Activated CD4-positive, alpha-beta T cell treated with anti-CD3 and anti-CD28 coated beads for 36 hours (primary cell): ENCODE measurements at regions of chr11 and their contacts with region 1.

Region 1: DNA sequence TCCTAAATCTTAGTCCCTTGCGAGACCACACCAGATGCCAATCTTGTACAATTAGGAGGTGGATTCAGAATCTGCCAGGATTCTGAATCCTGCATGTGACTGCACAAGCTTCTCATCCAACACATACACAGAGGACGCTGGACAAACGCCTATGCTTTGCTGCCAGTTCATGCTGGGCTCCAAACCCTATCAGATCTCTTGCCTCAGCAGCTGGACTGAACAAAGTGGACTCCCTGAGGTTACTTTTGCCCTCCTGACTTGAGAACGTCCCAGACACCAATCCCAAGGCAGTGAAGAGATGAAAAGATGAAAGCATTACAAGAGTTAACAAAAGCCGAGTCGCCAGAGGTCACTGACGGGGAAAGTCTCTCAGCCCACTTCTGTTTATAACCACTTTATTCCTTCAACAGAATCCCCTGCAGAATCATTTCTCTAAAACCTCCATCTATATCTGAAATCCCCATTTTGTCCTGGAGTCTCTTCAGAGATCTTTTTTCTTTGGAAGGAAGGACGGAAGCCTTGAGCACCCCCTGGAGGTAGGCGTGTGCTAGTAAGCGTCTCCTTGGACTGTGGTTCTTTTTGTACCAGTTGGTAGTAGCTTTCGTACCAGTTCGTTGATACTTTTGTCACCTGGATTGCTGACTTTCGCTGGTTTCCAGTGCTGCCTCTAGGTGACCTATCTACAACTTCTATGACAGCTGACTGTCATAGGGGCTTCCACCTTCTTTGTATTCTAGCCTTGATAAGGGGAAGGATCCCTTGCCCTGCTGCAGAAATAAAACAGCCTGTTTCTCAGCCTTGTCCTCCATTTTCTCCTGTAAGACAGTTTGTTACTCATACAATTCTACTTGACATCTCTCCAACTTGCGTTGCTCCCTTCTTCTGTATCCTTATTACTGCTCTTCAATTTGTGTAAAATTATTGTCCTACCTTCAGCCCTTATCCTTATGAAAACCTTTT is 26.1 kb upstream of the EED start:
- DNase-seq: peak; percentile 79
- ATAC-seq: peak; percentile 40
- H3K4me3 Mint-ChIP-seq: peak overlapping the region; percentile 26
- H3K27ac Mint-ChIP-seq: peak overlapping the region; percentile 91
- H3K4me1 Mint-ChIP-seq: peaks cover 78% of the 10 kb centered on the region
- H3K27me3 Mint-ChIP-seq: no peaks in the 10 kb centered on the region

Region 2: GRCh38 chr11:86047275-86047991 is 171.0 kb before region 1 on chr11:
- CTCF ChIA-PET with region 1: interaction called, 19 read pairs
- POLR2A ChIA-PET with region 1: no interaction called
- intact Hi-C with region 1: loop called (anchors 1 kb)
- DNase-seq: peak; percentile 75
- ATAC-seq: peak; percentile 73
- H3K4me3 Mint-ChIP-seq: peak overlapping the region; percentile 65
- H3K27ac Mint-ChIP-seq: peak overlapping the region; percentile 96
- H3K4me1 Mint-ChIP-seq: peaks cover 96% of the 10 kb centered on the region
- H3K27me3 Mint-ChIP-seq: no peaks in the 10 kb centered on the region

Region 3: GRCh38 chr11:86138958-86139357 is 79.4 kb before region 1 on chr11:
- CTCF ChIA-PET with region 1: no interaction called
- POLR2A ChIA-PET with region 1: no interaction called
- intact Hi-C with region 1: loop called in 1 of 2 experiments (anchors 1 kb)
- DNase-seq: peak; percentile 41
- ATAC-seq: peak; percentile 81
- H3K4me3 Mint-ChIP-seq: no peak overlapping the region
- H3K27ac Mint-ChIP-seq: peak overlapping the region; percentile 55
- H3K4me1 Mint-ChIP-seq: peaks cover 31% of the 10 kb centered on the region
- H3K27me3 Mint-ChIP-seq: no peaks in the 10 kb centered on the region

Region 4: GRCh38 chr11:86193297-86194095 is 24.9 kb before region 1 on chr11:
- CTCF ChIA-PET with region 1: interaction called, 17 read pairs
- POLR2A ChIA-PET with region 1: no interaction called
- intact Hi-C with region 1: no loop called
- DNase-seq: peak; percentile 74
- ATAC-seq: peak; percentile 99
- H3K4me3 Mint-ChIP-seq: peak overlapping the region; percentile 53
- H3K27ac Mint-ChIP-seq: peak overlapping the region; percentile 82
- H3K4me1 Mint-ChIP-seq: peaks cover 27% of the 10 kb centered on the region
- H3K27me3 Mint-ChIP-seq: peaks cover 6% of the 10 kb centered on the region

Region 5: DNA sequence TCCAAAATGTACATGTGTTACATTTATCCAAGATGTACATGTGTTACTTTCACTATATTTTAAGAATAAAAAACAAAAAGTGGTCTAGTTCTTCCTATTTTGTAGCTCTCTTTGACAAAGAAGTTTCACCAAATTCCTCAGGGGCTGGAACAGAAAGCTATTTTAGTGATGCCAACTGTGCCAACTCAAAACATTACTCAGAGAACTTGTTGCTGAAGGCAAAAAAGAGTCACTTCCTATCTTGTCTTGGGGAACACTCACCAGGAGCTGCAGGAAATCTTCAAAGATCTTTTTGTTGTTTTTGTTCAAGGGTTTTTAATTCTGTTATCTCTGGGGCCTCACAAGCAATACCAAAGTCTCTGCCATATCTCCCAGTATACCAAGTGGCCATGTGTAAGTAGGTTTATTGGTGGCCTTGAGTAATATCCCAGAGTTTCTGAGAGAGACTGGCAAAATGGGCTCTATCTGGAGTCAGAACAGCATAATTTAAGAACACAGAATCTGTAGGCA is 12.6 kb after region 1 on chr11:
- CTCF ChIA-PET with region 1: interaction called, 32 read pairs
- POLR2A ChIA-PET with region 1: interaction called, 9 read pairs
- intact Hi-C with region 1: loop called (anchors 1 kb)
- DNase-seq: no peak
- ATAC-seq: peak; percentile 28
- H3K4me3 Mint-ChIP-seq: peak overlapping the region; percentile 20
- H3K27ac Mint-ChIP-seq: peak overlapping the region; percentile 86
- H3K4me1 Mint-ChIP-seq: peaks cover 65% of the 10 kb centered on the region
- H3K27me3 Mint-ChIP-seq: no peaks in the 10 kb centered on the region

Region 6: DNA sequence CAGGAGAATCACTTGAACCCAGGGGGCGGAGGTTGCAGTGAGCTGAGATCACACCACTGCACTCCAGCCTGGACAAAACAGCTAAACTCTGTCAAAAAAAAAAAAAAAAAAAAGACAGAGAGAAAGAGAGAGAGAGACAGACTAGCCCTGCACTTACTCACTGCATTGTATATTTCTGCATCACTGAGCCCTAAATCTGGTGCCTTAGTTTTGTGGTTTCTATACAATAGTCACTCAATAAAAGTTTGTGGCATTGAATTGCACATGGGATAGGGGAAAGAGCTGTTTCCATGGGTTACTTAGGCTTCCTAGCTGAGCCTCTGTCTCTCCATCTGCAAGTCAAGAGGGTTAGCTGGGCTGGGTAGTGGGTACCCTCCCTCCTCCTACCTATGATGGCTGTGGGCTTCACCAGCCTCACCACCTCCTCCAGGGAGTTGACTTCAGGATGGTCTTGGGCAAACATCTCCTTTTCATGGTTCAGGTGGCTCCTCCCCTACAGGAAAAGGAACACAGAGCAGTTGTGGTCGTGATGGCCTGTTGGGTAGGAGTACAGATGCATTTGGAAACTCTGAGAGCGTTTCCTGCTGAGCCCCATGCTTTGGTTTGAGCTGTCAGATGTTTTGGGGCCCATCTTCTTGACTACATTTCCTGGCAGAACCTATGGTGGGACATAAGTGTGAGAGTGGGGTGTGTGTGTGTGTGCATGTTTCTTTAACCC is 229.5 kb after region 1 on chr11:
- CTCF ChIA-PET with region 1: no interaction called
- POLR2A ChIA-PET with region 1: no interaction called
- intact Hi-C with region 1: no loop called
- DNase-seq: peak; percentile 64
- ATAC-seq: peak; percentile 91
- H3K4me3 Mint-ChIP-seq: no peak overlapping the region
- H3K27ac Mint-ChIP-seq: no peak overlapping the region
- H3K4me1 Mint-ChIP-seq: peaks cover 21% of the 10 kb centered on the region
- H3K27me3 Mint-ChIP-seq: no peaks in the 10 kb centered on the region